CD4-positive, alpha-beta memory T cell (primary cell): ENCODE measurements at regions of chr1 and their contacts with region 1.

Region 1: DNA sequence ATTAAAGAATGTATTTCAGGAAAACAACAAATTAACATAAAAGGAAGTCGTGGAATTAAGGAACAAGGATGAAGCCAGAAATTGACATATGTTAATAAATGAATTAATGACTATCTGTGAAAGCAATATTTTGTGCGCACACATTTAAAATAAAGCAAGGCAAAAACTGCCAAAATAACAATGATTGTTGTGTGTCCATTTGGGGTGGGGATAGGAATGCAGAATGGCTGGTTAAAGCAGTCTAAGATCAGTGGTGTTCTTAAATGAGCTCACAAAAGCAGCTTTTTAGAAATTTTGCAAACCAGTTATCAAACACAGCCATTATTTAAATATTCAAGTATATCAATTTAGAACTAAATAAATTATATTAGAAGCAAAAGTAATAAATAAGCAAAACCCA is 490.6 kb upstream of the PKN2 start:
- DNase-seq: no peak
- H3K4me3 ChIP-seq: no peak overlapping the region
- H3K4me3 Mint-ChIP-seq: no peak overlapping the region
- H3K27ac ChIP-seq: no peak overlapping the region
- H3K27ac Mint-ChIP-seq: no peak overlapping the region
- H3K4me1 ChIP-seq: no peaks in the 10 kb centered on the region
- H3K4me1 Mint-ChIP-seq: peaks cover 0 to 6% (median 0%) of the 10 kb centered on the region in 4 donors
- H3K27me3 ChIP-seq: no peaks in the 10 kb centered on the region
- H3K27me3 Mint-ChIP-seq: peaks cover 0 to 2% of the 10 kb centered on the region in 2 donors

Region 2: DNA sequence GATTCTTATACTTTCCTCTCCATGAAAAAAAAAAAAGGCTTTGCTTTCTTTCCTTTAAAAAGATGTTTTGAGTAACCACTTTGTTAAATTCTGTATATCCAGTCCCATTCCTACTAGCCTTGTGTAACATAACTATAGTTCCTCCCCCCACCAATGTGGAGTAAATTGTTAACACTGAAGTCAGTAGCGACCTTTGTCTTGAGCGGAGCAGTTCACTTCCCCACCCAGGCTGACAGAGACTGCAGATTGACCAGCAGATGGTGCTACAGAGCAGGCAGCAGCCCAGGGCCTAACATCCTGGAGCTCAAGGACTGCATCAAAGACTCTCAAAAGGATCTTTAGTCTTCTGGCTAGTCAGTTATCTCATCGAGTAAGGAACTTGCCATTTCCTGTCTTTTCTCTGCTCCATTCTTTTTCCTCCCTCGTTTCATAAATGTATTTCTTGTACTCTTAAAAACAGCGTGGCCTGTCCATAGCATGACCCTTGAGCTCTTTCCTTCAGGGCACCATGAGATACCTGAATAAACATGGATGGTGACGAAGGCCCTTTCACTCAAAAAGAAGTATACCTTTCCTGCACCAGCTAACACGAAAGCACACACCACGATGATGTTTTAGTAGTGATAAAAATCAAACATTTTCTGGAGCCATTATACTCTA is 12.8 kb before region 1 on chr1:
- CTCF ChIA-PET with region 1: interaction called, 10 read pairs
- POLR2A ChIA-PET with region 1: no interaction called
- intact Hi-C with region 1: no loop called
- DNase-seq: peak in 4 of 5 donors; percentile 23 to 35 (median 30)
- H3K4me3 ChIP-seq: no peak overlapping the region
- H3K4me3 Mint-ChIP-seq: no peak overlapping the region
- H3K27ac ChIP-seq: no peak overlapping the region
- H3K27ac Mint-ChIP-seq: peak overlapping the region in 1 of 7 donors; percentile 48
- H3K4me1 ChIP-seq: no peaks in the 10 kb centered on the region
- H3K4me1 Mint-ChIP-seq: peaks cover 0 to 5% (median 2%) of the 10 kb centered on the region in 4 donors
- H3K27me3 ChIP-seq: no peaks in the 10 kb centered on the region
- H3K27me3 Mint-ChIP-seq: peaks cover 3 to 7% of the 10 kb centered on the region in 2 donors